Activated CD4-positive, alpha-beta memory T cell treated with anti-CD3 and anti-CD28 coated beads, Interleukin-2, amount 10 ng/mL, durations not matched to agents 7 days and 5 days (primary cell): ENCODE measurements at regions of chr17 and their contacts with region 1.

Region 1: GRCh38 chr17:59427425-59427921 is 96.0 kb downstream of the YPEL2 start:
- DNase-seq: peak; percentile 29
- H3K4me3 Mint-ChIP-seq: no peak overlapping the region
- H3K27ac Mint-ChIP-seq: no peak overlapping the region
- H3K4me1 Mint-ChIP-seq: peaks cover 31% of the 10 kb centered on the region
- H3K27me3 Mint-ChIP-seq: no peaks in the 10 kb centered on the region

Region 2: GRCh38 chr17:59331129-59331928 is 96.1 kb before region 1 on chr17 and contains the start of gene YPEL2:
- CTCF ChIA-PET with region 1: interaction called, 12 read pairs
- POLR2A ChIA-PET with region 1: interaction called, 5 read pairs
- DNase-seq: peak; percentile 90
- H3K4me3 Mint-ChIP-seq: peak within 1 kb of the TSS; percentile 85
- H3K27ac Mint-ChIP-seq: peak within 1 kb of the TSS; percentile 89
- H3K4me1 Mint-ChIP-seq: peaks cover 65% of the 10 kb centered on the region
- H3K27me3 Mint-ChIP-seq: no peaks in the 10 kb centered on the region
- total RNA-seq, gene YPEL2: 17.1 to 18.4 TPM

Region 3: DNA sequence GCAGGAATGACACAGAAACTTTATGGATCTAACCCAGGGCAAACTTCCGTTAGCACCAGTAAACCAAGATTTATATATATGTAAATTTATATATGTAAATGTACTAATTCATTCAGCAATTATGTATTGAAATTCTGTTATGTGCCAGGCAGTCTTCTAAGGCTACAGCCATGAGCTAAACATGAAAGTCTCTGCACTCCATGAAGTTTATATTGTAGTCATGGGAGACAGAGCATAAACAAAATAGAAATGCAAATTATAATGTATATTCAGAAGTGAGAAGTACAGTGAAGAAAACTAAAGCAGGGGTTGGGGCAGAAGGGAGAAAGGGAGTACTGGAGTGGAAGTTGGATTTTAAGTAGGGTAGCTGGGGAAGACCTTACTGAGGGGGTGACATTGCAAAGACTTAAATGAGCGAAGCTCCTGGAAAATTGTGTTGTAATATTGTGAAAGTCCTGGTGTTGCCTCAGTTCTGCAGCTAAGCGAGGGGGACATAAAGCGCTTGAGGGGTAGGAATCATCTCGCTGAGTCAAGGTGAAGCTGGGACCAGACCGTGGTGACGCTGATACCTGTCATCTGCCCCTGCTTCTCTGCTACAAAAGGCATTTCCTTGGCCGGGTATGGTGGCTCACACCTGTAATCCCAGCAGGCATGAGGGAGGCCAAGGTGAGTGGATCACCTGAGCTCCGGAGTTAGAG is 31.2 kb before region 1 on chr17:
- CTCF ChIA-PET with region 1: no interaction called
- POLR2A ChIA-PET with region 1: no interaction called
- DNase-seq: no peak
- H3K4me3 Mint-ChIP-seq: no peak overlapping the region
- H3K27ac Mint-ChIP-seq: no peak overlapping the region
- H3K4me1 Mint-ChIP-seq: peaks cover 5% of the 10 kb centered on the region
- H3K27me3 Mint-ChIP-seq: no peaks in the 10 kb centered on the region